IMR-90 (cell line): ENCODE measurements at regions of chr14 and their contacts with region 1.

Region 1: GRCh38 chr14:86915406-86915805 is 1077.6 kb downstream of the GALC start:
- DNase-seq: peak; percentile 47
- ATAC-seq: peak; percentile 85
- H3K4me3 ChIP-seq: no peak overlapping the region
- H3K27ac ChIP-seq: no peak overlapping the region
- H3K4me1 ChIP-seq: 0 out of 2 replicates have a peak, but pooled peaks cover 2% of the 10 kb centered on the region
- H3K27me3 ChIP-seq: no peaks in the 10 kb centered on the region
- CTCF ChIP-seq: no peak
- POLR2A ChIP-seq: no peak
- RAD21 ChIP-seq: no peak

Region 2: GRCh38 chr14:86462193-86462753 is 453.1 kb before region 1 on chr14:
- CTCF ChIA-PET with region 1: no interaction called
- POLR2A ChIA-PET with region 1: no interaction called
- dilution Hi-C with region 1: no loop called
- in situ Hi-C with region 1: no loop called
- intact Hi-C with region 1: loop called (anchors 5 kb)
- DNase-seq: peak; percentile 30
- ATAC-seq: no peak
- H3K4me3 ChIP-seq: no peak overlapping the region
- H3K27ac ChIP-seq: no peak overlapping the region
- H3K4me1 ChIP-seq: no peaks in the 10 kb centered on the region
- H3K27me3 ChIP-seq: no peaks in the 10 kb centered on the region
- CTCF ChIP-seq: peak; percentile 42
- POLR2A ChIP-seq: no peak
- RAD21 ChIP-seq: peak; percentile 47

Region 3: DNA sequence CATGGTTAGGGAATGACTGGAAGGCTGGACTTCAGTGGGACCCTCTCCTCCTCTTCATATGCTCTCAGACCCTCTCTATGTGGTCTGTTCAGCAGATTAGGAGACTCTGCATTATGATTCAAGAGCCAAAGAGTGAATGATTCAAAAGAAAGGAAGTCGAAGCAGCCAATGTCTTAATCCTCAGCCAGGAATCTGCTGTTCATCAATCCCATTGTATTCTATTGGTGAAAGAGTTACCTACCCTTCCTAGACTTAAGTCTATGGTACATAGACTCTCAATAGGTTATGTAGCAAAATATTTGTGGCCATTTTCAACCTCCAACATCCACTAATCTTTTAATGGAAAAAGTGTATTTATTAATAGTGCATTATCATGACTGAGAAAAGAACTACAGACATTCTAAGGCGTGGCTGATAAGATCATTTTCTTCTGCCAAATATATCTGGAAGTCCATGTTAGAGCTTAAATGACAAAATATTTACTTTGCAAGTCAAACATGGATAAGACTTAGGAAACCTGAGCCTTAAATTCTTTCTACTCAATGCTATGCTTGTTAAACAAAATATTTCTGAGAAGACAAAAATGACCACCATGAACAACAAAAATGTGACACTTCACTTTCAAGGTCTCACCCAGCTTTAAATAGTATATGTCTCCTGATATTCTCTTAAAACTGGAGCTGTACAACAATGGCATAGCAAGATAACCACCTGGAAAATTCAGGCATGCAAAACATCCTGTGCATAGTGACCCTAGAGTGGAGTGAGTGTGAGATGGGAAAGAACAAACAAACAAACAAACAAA is 23.1 kb before region 1 on chr14:
- CTCF ChIA-PET with region 1: no interaction called
- POLR2A ChIA-PET with region 1: no interaction called
- dilution Hi-C with region 1: no loop called
- in situ Hi-C with region 1: no loop called
- intact Hi-C with region 1: no loop called
- DNase-seq: peak; percentile 15
- ATAC-seq: peak; percentile 65
- H3K4me3 ChIP-seq: no peak overlapping the region
- H3K27ac ChIP-seq: peak overlapping the region; percentile 57; the same call in 1 of the 2 replicates
- H3K4me1 ChIP-seq: peaks cover 5% of the 10 kb centered on the region
- H3K27me3 ChIP-seq: no peaks in the 10 kb centered on the region
- CTCF ChIP-seq: no peak
- POLR2A ChIP-seq: no peak
- RAD21 ChIP-seq: no peak

Region 4: GRCh38 chr14:87199381-87199780 is 284.0 kb after region 1 on chr14:
- CTCF ChIA-PET with region 1: no interaction called
- POLR2A ChIA-PET with region 1: no interaction called
- dilution Hi-C with region 1: no loop called
- in situ Hi-C with region 1: no loop called
- intact Hi-C with region 1: no loop called
- DNase-seq: no peak
- ATAC-seq: no peak
- H3K4me3 ChIP-seq: no peak overlapping the region
- H3K27ac ChIP-seq: no peak overlapping the region
- H3K4me1 ChIP-seq: no peaks in the 10 kb centered on the region
- H3K27me3 ChIP-seq: no peaks in the 10 kb centered on the region
- CTCF ChIP-seq: no peak
- POLR2A ChIP-seq: no peak
- RAD21 ChIP-seq: no peak

Region 5: GRCh38 chr14:87615822-87616679 is 700.6 kb after region 1 on chr14:
- CTCF ChIA-PET with region 1: no interaction called
- POLR2A ChIA-PET with region 1: no interaction called
- dilution Hi-C with region 1: no loop called
- in situ Hi-C with region 1: no loop called
- intact Hi-C with region 1: loop called (anchors 10 kb)
- DNase-seq: peak; percentile 19
- ATAC-seq: peak; percentile 60
- H3K4me3 ChIP-seq: no peak overlapping the region
- H3K27ac ChIP-seq: no peak overlapping the region
- H3K4me1 ChIP-seq: no peaks in the 10 kb centered on the region
- H3K27me3 ChIP-seq: no peaks in the 10 kb centered on the region
- CTCF ChIP-seq: peak; percentile 55
- POLR2A ChIP-seq: no peak
- RAD21 ChIP-seq: peak; percentile 61